ENCODE measurements at regions of chr1 and their contacts with region 1.

Region 1: DNA sequence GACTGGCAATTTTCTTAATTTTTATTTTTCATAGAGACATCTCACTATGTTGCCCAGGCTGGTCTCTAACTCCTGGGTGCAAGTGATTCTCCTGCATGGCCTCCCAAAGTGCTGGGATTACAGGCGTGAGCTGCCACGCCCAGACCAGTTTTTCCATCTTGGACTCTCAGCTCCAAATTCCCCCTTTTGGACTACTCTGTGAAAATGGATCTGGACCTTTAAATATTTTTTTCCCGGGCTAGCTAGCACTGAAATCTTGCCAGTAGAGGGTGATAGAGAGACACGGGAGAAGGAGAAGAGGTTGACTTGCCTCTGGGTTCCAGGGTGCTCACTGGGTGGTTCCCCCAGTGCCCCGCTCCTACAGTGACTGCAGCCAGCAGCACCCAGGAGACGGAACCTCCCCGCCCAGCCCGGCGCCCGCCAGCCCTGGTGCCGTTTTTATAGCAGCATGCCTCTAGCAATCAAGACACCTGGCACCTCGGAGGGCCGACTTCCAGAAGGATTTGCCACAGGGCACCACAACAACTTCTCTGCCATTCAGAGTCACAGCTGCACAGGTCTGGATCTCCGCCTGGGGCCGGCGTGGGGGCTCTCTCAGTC is 34.7 kb upstream of the SCCPDH start:
- DNase-seq: peak; percentile 56
- H3K4me3 Mint-ChIP-seq: no peak overlapping the region
- H3K27ac Mint-ChIP-seq: no peak overlapping the region
- H3K4me1 Mint-ChIP-seq: no peaks in the 10 kb centered on the region
- H3K27me3 Mint-ChIP-seq: no peaks in the 10 kb centered on the region

Region 2: DNA sequence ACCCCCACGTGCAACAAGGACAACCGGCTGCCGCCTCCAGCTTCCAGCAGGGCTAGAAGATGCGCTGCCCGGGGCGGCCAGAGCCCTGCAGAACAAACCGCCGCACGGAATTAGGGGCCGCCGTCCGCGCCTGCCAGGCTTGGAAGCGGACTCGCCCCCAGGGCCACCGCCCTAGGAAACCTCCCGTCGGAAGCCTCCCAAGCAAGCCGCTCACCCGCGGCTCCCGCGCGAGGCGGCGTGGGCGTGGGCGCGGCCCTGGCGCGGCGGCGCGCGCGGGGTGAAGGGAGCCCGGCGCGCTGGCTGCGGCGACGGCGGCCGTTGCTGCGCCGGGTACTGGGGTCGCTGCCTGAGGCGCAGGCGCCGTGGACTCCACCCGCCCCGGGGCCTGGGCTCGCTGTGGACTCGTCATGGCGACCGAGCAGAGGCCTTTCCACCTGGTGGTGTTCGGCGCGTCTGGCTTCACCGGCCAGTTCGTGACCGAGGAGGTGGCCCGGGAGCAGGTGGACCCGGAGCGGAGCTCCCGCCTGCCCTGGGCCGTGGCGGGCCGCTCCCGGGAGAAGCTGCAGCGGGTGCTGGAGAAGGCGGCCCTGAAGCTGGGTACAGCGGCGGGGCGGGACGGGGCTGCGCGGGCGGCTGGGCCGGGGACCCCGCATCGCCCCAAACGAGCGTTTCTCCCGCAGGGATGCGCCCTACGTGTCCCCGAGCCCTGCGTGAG is 34.7 kb after region 1 on chr1 and contains the start of gene SCCPDH:
- CTCF ChIA-PET with region 1: no interaction called
- POLR2A ChIA-PET with region 1: no interaction called
- intact Hi-C with region 1: loop called (anchors 5 kb)
- DNase-seq: peak; percentile 76
- H3K4me3 Mint-ChIP-seq: peak within 1 kb of the TSS; percentile 82
- H3K27ac Mint-ChIP-seq: peak within 1 kb of the TSS; percentile 66
- H3K4me1 Mint-ChIP-seq: peaks cover 7% of the 10 kb centered on the region
- H3K27me3 Mint-ChIP-seq: peaks cover 5% of the 10 kb centered on the region
- total RNA-seq, gene SCCPDH: 21.5 to 22.5 TPM

Region 3: DNA sequence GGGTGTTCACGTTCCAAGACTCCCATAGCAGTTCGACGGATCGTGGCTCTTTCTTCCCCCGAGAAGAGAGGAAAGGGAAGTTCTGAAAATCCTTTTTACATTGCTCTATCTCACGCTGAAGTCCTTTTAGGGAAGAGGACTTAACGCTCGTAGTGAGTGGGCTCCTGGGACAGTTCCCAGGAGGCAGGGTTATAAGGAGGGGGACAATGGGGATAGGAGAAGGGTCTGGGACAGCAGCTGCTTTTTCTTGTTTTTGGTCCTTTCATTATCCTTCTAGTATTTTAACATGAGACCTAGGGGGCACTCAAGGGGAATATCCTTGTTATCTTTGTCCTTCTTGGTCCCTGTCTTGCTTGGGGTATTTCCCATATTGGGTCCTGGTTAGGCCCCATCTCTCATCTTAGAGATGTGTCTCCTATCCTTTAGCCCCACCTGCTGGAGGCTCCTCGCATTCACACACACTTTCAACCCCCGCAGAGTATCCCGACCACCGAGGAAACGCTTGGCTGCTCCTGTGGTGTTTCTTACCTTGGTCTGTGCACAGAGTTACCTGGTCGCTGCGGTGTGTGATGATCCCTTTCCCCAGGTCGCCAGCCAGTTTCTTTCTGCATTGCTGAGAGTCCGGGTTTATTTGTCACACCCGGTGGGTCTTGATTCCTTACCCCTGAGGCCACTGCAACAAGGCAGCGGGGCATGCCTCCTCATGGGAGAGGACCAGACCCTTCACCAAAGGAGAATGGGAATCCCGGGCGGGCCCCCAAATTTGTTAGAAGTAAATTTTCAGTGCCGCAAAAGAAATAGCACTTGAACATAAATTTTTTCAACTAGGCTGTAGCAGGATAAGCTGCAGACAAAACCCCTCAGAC is 64.4 kb after region 1 on chr1:
- CTCF ChIA-PET with region 1: interaction called, 6 read pairs
- POLR2A ChIA-PET with region 1: no interaction called
- intact Hi-C with region 1: loop called (anchors 2 kb)
- DNase-seq: peak; percentile 71
- H3K4me3 Mint-ChIP-seq: no peak overlapping the region
- H3K27ac Mint-ChIP-seq: no peak overlapping the region
- H3K4me1 Mint-ChIP-seq: no peaks in the 10 kb centered on the region
- H3K27me3 Mint-ChIP-seq: no peaks in the 10 kb centered on the region

Region 4: GRCh38 chr1:246971090-246971721 is 281.7 kb after region 1 on chr1:
- CTCF ChIA-PET with region 1: no interaction called
- POLR2A ChIA-PET with region 1: no interaction called
- intact Hi-C with region 1: loop called (anchors 2 kb)
- DNase-seq: peak; percentile 57
- H3K4me3 Mint-ChIP-seq: no peak overlapping the region
- H3K27ac Mint-ChIP-seq: no peak overlapping the region
- H3K4me1 Mint-ChIP-seq: no peaks in the 10 kb centered on the region
- H3K27me3 Mint-ChIP-seq: peaks cover 2% of the 10 kb centered on the region

Measured in activated CD4-positive, alpha-beta memory T cell treated with anti-CD3 and anti-CD28 coated beads for 36 hours (primary cell).